Naive thymus-derived CD4-positive, alpha-beta T cell (primary cell): ENCODE measurements at regions of chr11 and their contacts with region 1.

Region 1: GRCh38 chr11:61054927-61055562 is 47.2 kb upstream of the CD5 start:
- DNase-seq: no peak
- ATAC-seq: no peak
- H3K4me3 ChIP-seq: no peak overlapping the region
- H3K4me3 Mint-ChIP-seq: peak overlapping the region in 3 of 10 donors; percentile 9 to 33 (median 20)
- H3K27ac ChIP-seq: no peak overlapping the region
- H3K27ac Mint-ChIP-seq: peak overlapping the region in 2 of 9 donors; percentile 31 to 74
- H3K4me1 ChIP-seq: peaks cover 2 to 26% of the 10 kb centered on the region in 2 donors
- H3K4me1 Mint-ChIP-seq: peaks cover 20 to 68% (median 60%) of the 10 kb centered on the region in 7 donors
- H3K27me3 ChIP-seq: no peaks in the 10 kb centered on the region
- H3K27me3 Mint-ChIP-seq: no peaks in the 10 kb centered on the region

Region 2: GRCh38 chr11:61071208-61071681 is 16.2 kb after region 1 on chr11:
- CTCF ChIA-PET with region 1: interaction called, 4 read pairs
- POLR2A ChIA-PET with region 1: interaction called, 233 read pairs
- intact Hi-C with region 1: no loop called
- DNase-seq: peak in 8 of 9 donors; percentile 56 to 78 (median 71)
- ATAC-seq: peak; percentile 96
- H3K4me3 ChIP-seq: peak overlapping the region; percentile 21
- H3K4me3 Mint-ChIP-seq: peak overlapping the region; percentile 65 to 87 (median 76)
- H3K27ac ChIP-seq: peak overlapping the region; percentile 76
- H3K27ac Mint-ChIP-seq: peak overlapping the region; percentile 92 to 97 (median 97)
- H3K4me1 ChIP-seq: peaks cover 41 to 81% of the 10 kb centered on the region in 2 donors
- H3K4me1 Mint-ChIP-seq: peaks cover 69 to 99% (median 91%) of the 10 kb centered on the region in 7 donors
- H3K27me3 ChIP-seq: no peaks in the 10 kb centered on the region
- H3K27me3 Mint-ChIP-seq: peaks cover 0 to 4% (median 0%) of the 10 kb centered on the region in 5 donors